ENCODE measurements at regions of chr17 and their contacts with region 1.

Region 1: GRCh38 chr17:61635913-61636432 is 45.0 kb upstream of the NACA2 start:
- DNase-seq: peak; percentile 86
- ATAC-seq: peak; percentile 73
- H3K4me3 ChIP-seq: no peak overlapping the region
- H3K27ac ChIP-seq: no peak overlapping the region
- H3K4me1 ChIP-seq: no peaks in the 10 kb centered on the region
- H3K27me3 ChIP-seq: no peaks in the 10 kb centered on the region
- CTCF ChIP-seq: peak; percentile 97

Region 2: DNA sequence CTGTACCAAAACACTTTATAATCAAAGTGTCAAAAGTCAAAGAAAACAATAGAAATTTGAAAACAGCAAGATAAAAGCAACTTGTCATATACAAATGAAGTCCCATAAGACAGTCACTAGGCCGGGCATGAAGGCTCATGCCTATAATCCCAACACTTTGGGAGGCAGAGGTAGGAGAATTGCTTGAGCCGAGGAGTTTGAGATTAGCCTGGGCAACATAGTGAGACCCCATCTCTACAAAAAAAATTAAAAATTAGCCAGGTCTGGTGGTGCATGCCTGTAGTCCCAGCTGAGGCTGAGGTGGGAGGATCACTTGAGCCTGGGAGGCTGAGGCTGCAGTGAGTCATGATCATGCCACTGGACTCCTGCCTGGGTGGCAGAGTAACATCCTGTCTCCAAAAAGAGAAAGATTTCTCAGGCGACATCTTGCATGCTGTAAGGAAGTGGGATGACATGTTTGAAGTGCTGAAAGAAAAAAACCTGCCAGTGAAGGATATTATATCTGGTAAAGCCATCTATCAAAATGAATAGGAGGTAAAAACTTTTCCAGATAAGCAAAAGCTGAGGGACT is 53.7 kb after region 1 on chr17:
- CTCF ChIA-PET with region 1: no interaction called
- POLR2A ChIA-PET with region 1: no interaction called
- intact Hi-C with region 1: loop called (anchors 1 kb)
- DNase-seq: peak; percentile 43
- ATAC-seq: peak; percentile 76
- H3K4me3 ChIP-seq: no peak overlapping the region
- H3K27ac ChIP-seq: no peak overlapping the region
- H3K4me1 ChIP-seq: no peaks in the 10 kb centered on the region
- H3K27me3 ChIP-seq: no peaks in the 10 kb centered on the region
- CTCF ChIP-seq: no peak

Measured in PC-3 (cell line).